ENCODE measurements at regions of chr6 and their contacts with region 1.

Region 1: DNA sequence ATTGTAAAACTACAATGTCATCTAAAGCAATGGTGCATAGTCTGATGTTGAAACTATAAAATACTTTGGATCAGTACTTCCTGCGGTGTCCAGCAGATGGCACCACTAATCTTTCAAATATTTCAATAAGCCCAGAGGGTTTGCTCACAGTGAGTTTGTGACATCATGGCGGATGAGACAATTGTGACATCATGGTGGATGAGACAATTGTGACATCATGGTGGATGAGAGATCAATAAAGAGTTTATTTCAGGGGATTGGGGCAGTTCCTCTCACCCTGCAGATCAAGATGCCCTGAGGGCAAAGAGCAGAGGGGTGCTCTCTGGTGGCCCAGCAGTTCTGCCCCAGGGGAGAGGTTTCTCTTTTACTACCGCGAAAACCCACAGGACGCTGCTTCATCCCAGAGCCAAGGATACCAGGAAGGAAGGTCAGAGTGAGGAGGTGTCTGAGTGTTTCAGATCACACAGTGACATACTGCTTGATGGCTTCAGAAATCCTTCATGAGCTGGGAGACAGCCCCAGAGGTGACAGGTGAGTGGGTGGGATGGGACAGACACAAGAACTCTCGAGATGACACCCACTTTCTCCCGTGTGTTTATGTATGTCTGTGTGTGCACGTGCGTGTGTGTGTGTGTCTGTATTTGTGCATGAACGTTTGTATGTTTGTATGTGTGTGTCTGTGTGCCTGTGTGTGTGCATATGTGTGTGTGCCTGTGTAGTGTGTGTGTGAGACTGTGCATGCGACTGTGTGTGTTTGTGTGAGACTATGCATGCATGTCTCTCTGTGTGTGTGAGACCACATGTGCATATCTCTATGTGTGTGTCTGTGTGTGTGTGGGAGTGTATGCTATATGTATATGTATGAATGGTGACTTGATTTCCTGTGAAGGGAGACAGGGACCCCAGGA is 7.3 kb upstream of the ULBP2 start:
- DNase-seq: no peak
- ATAC-seq: peak; percentile 69

Region 2: GRCh38 chr6:150395398-150396009 is 461.0 kb after region 1 on chr6:
- intact Hi-C with region 1: loop called (anchors 10 kb)
- DNase-seq: no peak
- ATAC-seq: no peak